HepG2 (cell line): ENCODE measurements at regions of chr12 and their contacts with region 1.

Region 1: GRCh38 chr12:115423546-115423987 is 739.6 kb upstream of the TBX3 start:
- DNase-seq: peak; percentile 98
- ATAC-seq: peak; percentile 67
- H3K4me3 ChIP-seq: no peak overlapping the region
- H3K27ac ChIP-seq: peak overlapping the region; percentile 86
- H3K4me1 ChIP-seq: peaks cover 100% of the 10 kb centered on the region
- H3K27me3 ChIP-seq: no peaks in the 10 kb centered on the region
- CTCF ChIP-seq: 0 out of 2 replicates have a peak, but pooled peaks have one; percentile 15
- EP300 ChIP-seq: peak; percentile 73 to 99; a peak in 3 of 4 replicates
- POLR2A ChIP-seq: no peak
- RAD21 ChIP-seq: peak; percentile 61

Region 2: DNA sequence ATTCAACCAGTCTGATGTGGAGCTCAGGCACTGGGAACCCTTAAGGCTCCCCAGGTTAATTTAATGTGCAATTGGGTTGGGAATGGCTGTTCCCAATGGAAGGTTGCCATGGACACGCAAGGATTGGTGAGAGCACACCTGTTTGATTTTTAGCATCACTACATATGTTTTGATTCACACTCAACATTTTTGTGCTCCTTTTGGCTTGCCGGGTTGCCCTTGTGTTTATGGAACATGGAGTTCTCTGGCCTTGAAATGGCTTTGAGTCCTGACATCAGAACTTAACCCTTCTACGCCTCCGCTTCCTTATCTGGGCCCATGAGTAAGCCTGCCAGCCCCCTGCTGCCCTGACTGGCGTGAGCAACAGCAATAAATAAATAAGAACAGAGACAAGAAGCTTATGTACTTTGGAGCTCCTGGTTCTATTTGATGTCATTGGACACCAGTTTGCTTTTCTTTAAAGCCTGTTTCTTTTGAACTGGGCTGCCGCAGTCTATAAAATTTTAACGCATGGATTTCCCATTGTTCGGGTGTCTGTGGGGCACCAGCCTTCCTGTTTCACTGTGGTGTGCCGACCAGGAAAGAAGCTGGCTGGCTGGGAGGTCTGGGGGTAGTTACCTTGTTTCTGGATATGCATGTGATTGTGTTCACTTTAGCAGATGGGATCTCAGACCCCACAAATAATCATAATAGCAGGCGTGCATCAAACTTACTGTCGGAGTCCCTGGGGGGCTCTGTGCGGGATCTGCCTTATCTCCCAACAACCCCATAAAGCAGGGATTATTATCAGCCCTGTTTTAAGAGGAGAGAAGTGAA is 767.4 kb before region 1 on chr12:
- CTCF ChIA-PET with region 1: no interaction called
- POLR2A ChIA-PET with region 1: interaction called, 8 read pairs
- in situ Hi-C with region 1: no loop called
- intact Hi-C with region 1: loop called (anchors 5 kb)
- DNase-seq: peak; percentile 98
- ATAC-seq: peak; percentile 92
- H3K4me3 ChIP-seq: peak overlapping the region in 2 of 3 experiments; percentile 14 to 50; a peak in 2 of 6 replicates
- H3K27ac ChIP-seq: peak overlapping the region; percentile 97
- H3K4me1 ChIP-seq: peaks cover 63% of the 10 kb centered on the region
- H3K27me3 ChIP-seq: no peaks in the 10 kb centered on the region
- CTCF ChIP-seq: 0 out of 2 replicates have a peak, but pooled peaks have one; percentile 25
- EP300 ChIP-seq: peak; percentile 72 to 99; a peak in 3 of 4 replicates
- POLR2A ChIP-seq: peak in 1 of 2 experiments; percentile 46; a peak in 1 of 4 replicates
- RAD21 ChIP-seq: no peak

Region 3: DNA sequence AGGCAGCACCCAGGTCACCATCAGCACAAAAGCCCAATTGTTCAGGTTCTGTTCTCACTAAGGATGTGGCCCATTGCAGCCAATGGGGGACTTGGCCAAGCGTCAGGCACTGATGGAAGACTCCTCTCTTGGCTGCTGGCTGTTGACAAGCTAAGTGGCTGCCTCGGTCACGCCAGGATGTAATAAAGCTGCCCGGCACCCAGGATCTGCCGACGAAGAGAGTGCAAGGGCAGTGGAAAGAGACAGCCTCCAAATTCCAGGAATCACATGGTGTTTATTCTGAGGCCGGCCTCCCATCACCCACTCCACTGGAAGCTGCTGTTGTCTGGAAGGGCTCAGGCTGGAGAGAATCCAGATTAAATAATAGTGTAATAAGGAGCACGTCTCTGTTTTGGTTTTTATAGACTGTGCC is 287.8 kb before region 1 on chr12:
- CTCF ChIA-PET with region 1: no interaction called
- POLR2A ChIA-PET with region 1: no interaction called
- in situ Hi-C with region 1: no loop called
- intact Hi-C with region 1: no loop called
- DNase-seq: no peak
- ATAC-seq: no peak
- H3K4me3 ChIP-seq: no peak overlapping the region
- H3K27ac ChIP-seq: no peak overlapping the region
- H3K4me1 ChIP-seq: no peaks in the 10 kb centered on the region
- H3K27me3 ChIP-seq: no peaks in the 10 kb centered on the region; a peak in 1 of 5 replicates
- CTCF ChIP-seq: no peak
- EP300 ChIP-seq: no peak
- POLR2A ChIP-seq: no peak
- RAD21 ChIP-seq: no peak

Region 4: DNA sequence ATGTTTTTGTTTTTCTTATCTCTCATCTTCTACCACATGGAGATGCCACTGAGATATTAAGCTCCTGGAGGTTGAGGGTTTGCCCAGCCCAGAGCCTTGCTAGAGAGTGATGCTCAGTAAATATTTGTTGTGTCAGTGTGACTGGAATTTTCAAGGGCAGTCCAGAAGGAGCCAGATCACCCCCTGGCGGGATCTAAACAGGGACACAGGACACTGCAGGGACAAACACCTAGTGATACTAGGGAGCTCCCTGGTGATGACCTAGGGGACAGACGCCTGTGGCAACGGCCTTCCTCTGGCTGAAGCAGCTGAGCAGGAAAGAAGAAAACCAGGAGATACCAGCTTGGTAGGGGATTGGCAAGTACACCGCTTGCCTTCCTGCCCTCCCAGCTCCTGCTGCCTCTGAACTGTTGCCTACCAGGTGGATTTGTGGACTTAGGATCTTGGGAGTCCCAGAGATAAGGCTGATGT is 25.2 kb before region 1 on chr12:
- CTCF ChIA-PET with region 1: no interaction called
- POLR2A ChIA-PET with region 1: interaction called, 11 read pairs
- in situ Hi-C with region 1: no loop called
- intact Hi-C with region 1: no loop called
- DNase-seq: peak; percentile 92
- ATAC-seq: peak; percentile 100
- H3K4me3 ChIP-seq: no peak overlapping the region
- H3K27ac ChIP-seq: peak overlapping the region; percentile 30
- H3K4me1 ChIP-seq: peaks cover 57% of the 10 kb centered on the region
- H3K27me3 ChIP-seq: no peaks in the 10 kb centered on the region
- CTCF ChIP-seq: peak; percentile 96
- EP300 ChIP-seq: peak in 1 of 2 experiments; percentile 62; a peak in 2 of 4 replicates
- POLR2A ChIP-seq: no peak
- RAD21 ChIP-seq: peak; percentile 97

Region 5: DNA sequence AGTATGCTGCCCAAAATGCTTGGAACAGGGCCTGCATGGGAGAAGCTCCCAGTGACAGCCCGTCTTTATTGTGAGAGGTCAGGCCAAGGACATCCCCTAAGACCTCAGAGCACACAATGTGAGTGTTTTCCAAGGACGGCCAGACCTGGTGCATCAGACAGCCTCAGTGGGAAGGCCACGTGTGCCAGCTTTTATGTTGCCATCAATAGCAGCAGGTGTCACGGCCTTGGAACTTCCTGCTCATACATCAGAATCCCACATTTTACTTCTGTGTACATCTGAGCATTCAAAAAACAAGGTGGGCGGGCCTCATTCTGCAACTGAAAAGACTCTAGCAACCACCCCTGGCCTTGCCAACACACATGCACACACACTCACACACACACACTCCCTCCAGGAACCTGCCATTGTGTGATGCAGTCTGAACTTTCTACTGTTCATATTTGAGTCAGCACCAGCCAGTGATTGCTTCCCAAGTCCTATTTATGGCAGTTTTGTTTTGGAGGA is 13.5 kb after region 1 on chr12:
- CTCF ChIA-PET with region 1: interaction called, 3 read pairs
- POLR2A ChIA-PET with region 1: interaction called, 99 read pairs
- in situ Hi-C with region 1: no loop called
- intact Hi-C with region 1: no loop called
- DNase-seq: peak; percentile 80
- ATAC-seq: peak; percentile 30; the same call in 2 of the 3 replicates
- H3K4me3 ChIP-seq: no peak overlapping the region
- H3K27ac ChIP-seq: peak overlapping the region; percentile 45
- H3K4me1 ChIP-seq: peaks cover 90% of the 10 kb centered on the region
- H3K27me3 ChIP-seq: no peaks in the 10 kb centered on the region
- CTCF ChIP-seq: no peak
- EP300 ChIP-seq: peak in 1 of 2 experiments; percentile 59; a peak in 1 of 4 replicates
- POLR2A ChIP-seq: no peak
- RAD21 ChIP-seq: no peak

Region 6: DNA sequence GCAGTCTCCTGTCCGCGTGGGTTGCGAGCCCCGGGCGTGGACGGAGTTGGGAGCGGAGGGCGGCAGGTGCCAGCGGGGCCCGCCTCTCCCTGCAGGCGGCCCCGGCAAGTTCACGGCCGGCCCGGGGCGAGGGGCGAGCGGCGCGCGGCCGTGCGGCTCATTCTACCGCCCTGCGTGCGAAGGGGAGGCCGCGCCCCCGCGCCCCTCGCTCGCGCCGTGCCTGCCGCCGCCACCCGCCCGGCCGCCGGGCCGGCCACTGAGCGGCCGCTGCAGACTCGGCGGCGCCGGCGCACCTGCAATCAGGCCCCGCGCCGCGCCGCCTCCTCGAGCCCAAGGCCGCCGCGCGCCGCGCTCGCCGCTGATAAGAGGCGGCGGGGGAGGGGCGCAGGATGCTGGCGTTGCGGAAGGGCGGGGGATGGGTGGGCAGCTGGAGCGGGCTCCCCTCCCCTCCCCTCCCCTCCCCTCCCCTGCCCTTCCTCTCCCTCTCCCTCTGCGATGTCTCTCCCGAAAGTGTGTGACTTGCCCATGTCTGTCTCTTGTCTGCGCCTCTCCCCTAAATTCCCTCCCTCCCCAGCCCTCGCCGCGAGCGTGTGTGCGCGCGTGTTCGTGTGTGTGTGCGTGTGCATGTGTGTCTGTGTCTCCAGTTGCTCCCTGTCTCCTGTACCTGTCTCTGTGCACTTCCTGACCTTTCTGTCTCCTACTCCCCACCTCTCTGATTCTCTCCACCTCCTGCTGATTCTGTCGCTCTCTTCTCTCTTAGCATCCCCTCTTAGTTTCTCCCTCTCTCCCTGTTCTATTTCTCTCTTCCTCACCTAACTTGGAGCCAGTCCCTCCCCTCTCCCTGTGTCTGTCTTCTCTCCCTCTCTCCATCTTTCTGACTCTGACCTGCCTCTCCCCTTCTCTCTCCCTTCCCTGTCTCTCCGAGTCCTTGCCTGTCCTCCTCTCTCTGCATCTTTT is 28.5 kb after region 1 on chr12:
- CTCF ChIA-PET with region 1: no interaction called
- POLR2A ChIA-PET with region 1: interaction called, 11 read pairs
- in situ Hi-C with region 1: no loop called
- intact Hi-C with region 1: loop called (anchors 2 kb)
- DNase-seq: peak; percentile 66
- ATAC-seq: peak; percentile 89
- H3K4me3 ChIP-seq: peak overlapping the region; percentile 25 to 59 (median 32); a peak in 5 of 6 replicates
- H3K27ac ChIP-seq: peak overlapping the region; percentile 73
- H3K4me1 ChIP-seq: peaks cover 91% of the 10 kb centered on the region
- H3K27me3 ChIP-seq: no peaks in the 10 kb centered on the region
- CTCF ChIP-seq: no peak
- EP300 ChIP-seq: peak; percentile 88; a peak in 3 of 4 replicates
- POLR2A ChIP-seq: no peak
- RAD21 ChIP-seq: peak; percentile 68

Region 7: DNA sequence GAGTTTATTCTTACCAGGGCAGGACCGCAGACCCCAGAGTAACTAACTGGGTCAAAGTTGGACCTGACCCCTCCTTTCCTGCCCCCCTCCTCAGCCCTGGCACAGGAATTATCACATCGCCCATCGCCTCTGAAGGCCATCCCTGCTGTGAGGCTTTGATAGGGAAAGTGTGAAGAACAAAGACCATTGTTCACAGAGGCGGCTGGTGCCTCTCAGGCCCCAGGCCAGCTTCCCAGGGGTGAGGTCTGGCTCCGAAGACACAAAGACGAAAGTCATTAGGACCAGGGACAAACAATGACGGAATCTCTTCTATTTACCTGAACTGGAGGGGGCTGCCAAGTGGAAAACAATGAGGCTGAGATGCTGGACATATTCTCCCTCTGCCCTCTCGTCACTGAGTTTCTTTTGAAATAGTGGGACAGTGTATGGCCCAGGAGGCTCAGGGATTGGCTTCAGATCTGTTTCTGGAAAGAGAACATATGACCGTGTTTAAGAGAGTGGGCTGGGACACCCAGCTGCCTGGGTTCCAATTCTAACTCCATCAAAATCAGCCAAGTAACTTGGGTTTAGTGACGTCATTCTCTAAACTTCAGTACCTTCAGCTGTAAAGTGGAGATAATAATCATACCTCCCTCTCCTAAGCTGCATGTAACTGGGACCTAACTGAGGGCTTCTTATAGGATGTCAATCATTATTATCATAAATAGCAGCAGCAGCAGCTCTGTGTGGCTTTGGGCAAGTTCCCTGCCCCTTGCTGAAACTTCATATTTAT is 84.6 kb after region 1 on chr12:
- CTCF ChIA-PET with region 1: no interaction called
- POLR2A ChIA-PET with region 1: no interaction called
- in situ Hi-C with region 1: no loop called
- intact Hi-C with region 1: loop called (anchors 2 kb)
- DNase-seq: peak; percentile 94
- ATAC-seq: peak; percentile 88
- H3K4me3 ChIP-seq: no peak overlapping the region; a peak in 1 of 6 replicates
- H3K27ac ChIP-seq: peak overlapping the region; percentile 9
- H3K4me1 ChIP-seq: peaks cover 30% of the 10 kb centered on the region
- H3K27me3 ChIP-seq: 0 out of 5 replicates have a peak, but pooled peaks cover 0 to 4% of the 10 kb centered on the region in 2 experiments
- CTCF ChIP-seq: no peak
- EP300 ChIP-seq: peak; percentile 27 to 77; a peak in 3 of 4 replicates
- POLR2A ChIP-seq: no peak
- RAD21 ChIP-seq: no peak